A549 (cell line): ENCODE measurements at regions of chr7 and their contacts with region 1.

Region 1: DNA sequence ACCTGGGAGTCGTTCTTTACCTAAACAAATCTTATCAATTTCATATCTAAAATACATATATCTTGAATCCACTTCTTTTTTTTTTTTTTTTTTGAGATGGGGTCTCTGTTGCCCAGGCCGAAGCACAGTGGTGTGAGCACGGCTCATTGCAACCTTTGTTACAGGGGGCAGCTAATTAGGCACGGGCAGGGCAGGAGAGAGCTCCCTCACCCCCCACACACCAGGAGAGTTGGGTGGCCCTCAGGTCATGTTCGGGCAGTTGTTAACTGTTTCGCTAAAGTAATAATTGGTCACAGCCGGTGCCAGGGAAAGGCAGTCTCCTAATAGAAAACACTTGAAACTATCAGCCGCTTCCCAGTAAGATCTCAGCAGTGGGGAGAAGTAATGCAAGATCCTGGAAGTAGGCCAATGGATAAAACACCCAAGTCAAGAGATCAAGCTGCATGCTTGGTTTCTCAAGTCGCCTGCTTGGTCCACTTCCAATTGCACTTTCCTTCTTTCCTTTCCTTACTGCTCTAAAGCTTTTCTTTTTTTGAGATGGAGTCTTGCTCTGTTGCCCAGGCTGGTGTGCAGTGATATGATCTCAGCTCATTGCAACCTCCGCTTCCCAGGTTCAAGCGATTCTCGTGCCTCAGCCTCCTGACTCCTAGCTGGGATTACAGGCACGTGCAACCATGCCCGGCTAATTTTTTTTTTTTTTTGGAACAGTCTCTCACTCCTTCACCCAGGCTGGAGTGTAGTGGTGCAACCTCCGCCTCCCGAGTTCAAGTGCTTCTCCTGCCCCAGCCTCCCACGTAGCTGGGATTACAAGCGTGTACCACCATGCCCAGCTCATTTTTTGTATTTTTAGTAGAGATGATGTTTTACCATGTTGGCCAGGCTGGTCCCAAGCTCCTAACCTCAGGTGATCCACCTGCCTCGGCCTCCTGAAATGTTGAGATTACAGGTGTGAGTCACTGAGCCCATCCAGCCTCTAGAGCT is 21.3 kb upstream of the EFCAB10 start:
- DNase-seq: no peak
- ATAC-seq: no peak
- H3K4me3 ChIP-seq: no peak overlapping the region
- H3K27ac ChIP-seq: no peak overlapping the region
- H3K4me1 ChIP-seq: no peaks in the 10 kb centered on the region
- CTCF ChIP-seq: no peak
- EP300 ChIP-seq: no peak
- POLR2A ChIP-seq: no peak
- RAD21 ChIP-seq: no peak

Region 2: GRCh38 chr7:105589356-105590077 is 13.1 kb before region 1 on chr7:
- CTCF ChIA-PET with region 1: interaction called, 28 read pairs
- POLR2A ChIA-PET with region 1: no interaction called
- DNase-seq: peak; percentile 79 to 82
- ATAC-seq: peak; percentile 99
- H3K4me3 ChIP-seq: no peak overlapping the region
- H3K27ac ChIP-seq: no peak overlapping the region
- H3K4me1 ChIP-seq: no peaks in the 10 kb centered on the region
- CTCF ChIP-seq: peak; percentile 85
- EP300 ChIP-seq: no peak
- POLR2A ChIP-seq: no peak
- RAD21 ChIP-seq: peak; percentile 87 to 91

Region 3: DNA sequence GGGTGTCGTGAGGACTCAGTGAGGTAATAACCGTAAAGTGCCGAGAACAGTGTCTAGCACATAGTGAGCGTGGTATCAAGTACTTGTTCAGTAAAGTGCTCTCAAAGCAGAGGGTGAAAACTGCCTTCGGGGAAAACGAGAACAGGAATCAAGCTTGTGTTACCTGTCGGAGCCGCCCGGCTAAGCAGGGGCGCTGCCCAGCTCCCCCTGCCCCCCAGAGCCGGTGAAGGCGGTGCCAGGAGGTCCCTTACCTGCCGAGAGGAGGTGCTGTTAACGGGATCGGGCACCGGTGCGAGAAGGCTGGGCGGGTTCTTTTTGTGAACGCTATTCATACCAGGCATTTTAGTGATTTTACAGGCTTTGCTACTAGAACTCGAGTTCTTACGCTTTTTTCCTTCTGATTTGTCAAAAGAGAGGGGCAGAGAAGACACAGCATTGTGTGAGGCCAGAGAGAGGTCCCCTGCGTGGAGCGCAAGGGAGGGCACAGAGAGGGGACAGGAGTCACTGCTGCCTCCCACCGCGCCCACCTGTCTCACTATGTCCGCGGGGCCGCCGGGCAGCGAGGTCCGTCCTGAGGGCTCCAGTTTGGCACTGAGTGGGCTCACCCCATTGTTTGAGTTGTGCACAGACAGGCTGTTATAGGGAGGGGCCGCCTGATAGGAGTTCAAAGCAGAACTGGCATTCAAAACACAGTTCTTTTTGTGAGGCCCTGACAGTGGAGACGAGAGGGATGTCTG is 11.2 kb after region 1 on chr7:
- CTCF ChIA-PET with region 1: no interaction called
- POLR2A ChIA-PET with region 1: no interaction called
- DNase-seq: no peak
- ATAC-seq: no peak
- H3K4me3 ChIP-seq: no peak overlapping the region
- H3K27ac ChIP-seq: no peak overlapping the region
- H3K4me1 ChIP-seq: no peaks in the 10 kb centered on the region
- CTCF ChIP-seq: no peak
- EP300 ChIP-seq: no peak
- POLR2A ChIP-seq: no peak
- RAD21 ChIP-seq: no peak

Region 4: GRCh38 chr7:105643384-105643783 is 40.8 kb after region 1 on chr7:
- CTCF ChIA-PET with region 1: no interaction called
- POLR2A ChIA-PET with region 1: interaction called, 16 read pairs
- DNase-seq: no peak
- ATAC-seq: no peak
- H3K4me3 ChIP-seq: no peak overlapping the region
- H3K27ac ChIP-seq: no peak overlapping the region
- H3K4me1 ChIP-seq: peaks cover 11% of the 10 kb centered on the region
- CTCF ChIP-seq: no peak
- EP300 ChIP-seq: no peak
- POLR2A ChIP-seq: no peak
- RAD21 ChIP-seq: no peak